ENCODE measurements at regions of chr19 and their contacts with region 1.

Region 1: DNA sequence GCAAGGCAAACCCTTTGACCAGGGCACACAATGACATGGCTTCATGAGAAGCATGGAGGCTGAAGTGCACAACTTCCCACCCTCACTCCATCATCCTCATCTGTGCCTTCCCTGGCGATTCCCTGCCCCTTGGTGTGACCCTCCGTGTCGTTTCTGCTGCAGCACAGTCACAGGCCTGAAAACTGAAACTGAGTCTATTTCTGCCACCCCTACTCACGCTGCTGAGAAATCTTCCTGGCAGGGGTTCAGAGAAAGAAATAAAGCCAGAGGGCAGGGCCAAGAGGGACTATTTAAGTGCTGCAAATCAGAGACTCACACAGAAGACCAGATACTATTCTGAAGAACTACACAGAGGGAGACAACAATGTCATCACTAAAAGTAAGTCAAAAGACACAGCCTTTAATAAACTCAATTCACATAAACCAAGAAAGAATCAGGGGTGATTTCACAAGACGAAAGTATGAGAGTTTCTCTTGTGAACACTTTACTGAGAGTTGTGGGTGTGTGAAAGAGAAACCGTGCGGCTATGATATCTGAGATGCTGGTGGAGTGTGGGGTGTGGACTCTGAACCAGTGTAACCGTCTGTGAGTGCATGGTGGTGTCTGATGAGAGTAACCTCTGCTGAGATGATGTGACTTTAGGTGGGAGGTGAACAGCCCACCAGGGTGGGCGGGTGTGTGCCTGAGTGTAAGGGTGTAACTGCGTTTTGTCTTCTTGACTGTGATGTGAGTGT is 23.5 kb downstream of the LGALS16 start:
- DNase-seq: peak; percentile 76
- ATAC-seq: peak; percentile 81
- H3K4me3 Mint-ChIP-seq: peak overlapping the region; percentile 63
- H3K27ac Mint-ChIP-seq: peak overlapping the region; percentile 79
- H3K4me1 Mint-ChIP-seq: peaks cover 44% of the 10 kb centered on the region
- H3K27me3 Mint-ChIP-seq: peaks cover 2% of the 10 kb centered on the region

Region 2: GRCh38 chr19:39539519-39540332 is 139.5 kb before region 1 on chr19 and contains the start of gene EID2:
- CTCF ChIA-PET with region 1: interaction called, 25 read pairs
- POLR2A ChIA-PET with region 1: no interaction called
- intact Hi-C with region 1: loop called in 1 of 2 experiments (anchors 5 kb)
- DNase-seq: peak; percentile 98
- ATAC-seq: peak; percentile 80
- H3K4me3 Mint-ChIP-seq: peak within 1 kb of the TSS; percentile 84
- H3K27ac Mint-ChIP-seq: peak within 1 kb of the TSS; percentile 94
- H3K4me1 Mint-ChIP-seq: peaks cover 53% of the 10 kb centered on the region
- H3K27me3 Mint-ChIP-seq: no peaks in the 10 kb centered on the region
- total RNA-seq, gene EID2: 9.0 to 10.7 TPM

Region 3: DNA sequence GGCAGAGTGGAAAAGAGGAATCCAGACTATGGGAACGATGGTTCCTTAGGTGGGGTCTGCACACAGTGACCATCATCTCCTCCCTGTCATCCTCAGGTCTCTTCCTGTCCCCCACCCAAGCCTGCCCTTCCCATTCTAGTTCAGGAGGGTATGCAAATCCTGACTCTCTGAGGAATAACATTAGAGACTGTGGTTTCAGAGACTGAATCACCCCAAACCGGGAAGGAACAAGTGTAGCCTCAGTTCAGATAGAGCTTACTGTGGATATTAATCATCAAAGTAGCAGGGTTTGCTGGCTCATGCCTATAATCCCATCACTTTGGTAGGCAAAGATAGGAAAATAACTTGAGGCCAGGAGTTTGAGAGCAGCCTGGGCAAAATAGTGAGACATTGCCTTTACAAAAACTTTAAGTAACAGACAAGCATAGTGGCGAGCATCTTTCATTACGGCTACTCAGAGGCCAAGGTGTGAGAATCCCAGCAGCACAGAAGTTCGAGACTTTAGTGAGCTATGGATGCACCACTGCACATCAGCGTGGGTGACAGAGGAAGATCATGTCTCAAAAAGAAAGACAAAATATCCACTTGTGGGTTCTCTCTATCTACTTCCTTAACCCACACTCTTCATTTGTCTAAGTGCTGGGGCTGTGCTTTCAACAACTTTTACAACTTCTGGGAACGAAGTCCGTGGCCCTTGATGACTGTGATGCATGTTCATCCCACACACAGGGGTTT is 96.2 kb before region 1 on chr19:
- CTCF ChIA-PET with region 1: no interaction called
- POLR2A ChIA-PET with region 1: no interaction called
- intact Hi-C with region 1: loop called in 1 of 2 experiments (anchors 1 kb)
- DNase-seq: peak; percentile 54
- ATAC-seq: peak; percentile 75
- H3K4me3 Mint-ChIP-seq: no peak overlapping the region
- H3K27ac Mint-ChIP-seq: no peak overlapping the region
- H3K4me1 Mint-ChIP-seq: no peaks in the 10 kb centered on the region
- H3K27me3 Mint-ChIP-seq: peaks cover 37% of the 10 kb centered on the region

Region 4: GRCh38 chr19:39692166-39692565 is 12.9 kb after region 1 on chr19:
- CTCF ChIA-PET with region 1: no interaction called
- POLR2A ChIA-PET with region 1: no interaction called
- intact Hi-C with region 1: no loop called
- DNase-seq: peak; percentile 39
- ATAC-seq: peak; percentile 70
- H3K4me3 Mint-ChIP-seq: no peak overlapping the region
- H3K27ac Mint-ChIP-seq: no peak overlapping the region
- H3K4me1 Mint-ChIP-seq: peaks cover 7% of the 10 kb centered on the region
- H3K27me3 Mint-ChIP-seq: peaks cover 18% of the 10 kb centered on the region

Region 5: DNA sequence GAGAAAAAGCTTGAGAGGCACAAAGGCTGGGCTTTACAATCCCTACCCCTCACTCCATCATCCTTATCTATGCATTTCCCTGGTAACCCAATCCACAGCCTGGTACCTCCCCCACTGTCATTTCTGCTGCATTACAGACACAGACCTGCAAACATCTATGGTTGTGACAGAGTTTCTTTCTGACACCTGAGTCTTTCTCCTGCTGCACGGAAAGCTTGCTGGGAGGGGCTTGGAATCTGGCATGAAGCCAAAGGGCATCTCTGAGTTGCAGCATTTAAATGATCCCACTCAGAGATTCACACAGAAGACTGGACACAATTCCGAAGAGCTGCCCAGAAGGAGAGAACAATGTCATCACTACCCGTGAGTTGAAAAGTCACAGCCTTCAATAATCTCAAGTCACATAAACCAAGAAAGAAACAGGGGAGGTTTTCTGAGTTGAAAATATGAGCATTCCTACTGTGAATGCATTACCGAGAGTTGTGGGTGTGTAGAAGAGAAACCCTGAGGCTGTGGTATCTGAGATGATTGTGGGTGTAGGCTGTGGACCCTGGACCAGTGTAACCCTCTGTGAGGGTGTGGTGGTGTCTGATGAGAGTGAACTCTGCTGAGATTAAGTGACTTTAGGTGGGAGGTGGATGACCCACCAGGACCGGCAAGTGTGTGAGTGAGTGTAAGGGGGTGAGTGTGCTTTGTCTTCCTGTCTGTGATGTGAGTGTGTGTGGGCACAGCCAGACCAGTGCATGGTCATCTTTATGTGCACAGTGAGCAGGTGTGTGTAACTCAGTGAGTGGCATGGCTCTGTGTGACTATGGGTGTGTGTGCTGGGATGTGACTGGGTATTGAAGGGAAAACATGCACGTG is 25.2 kb after region 1 on chr19 and contains the start of gene LGALS14:
- CTCF ChIA-PET with region 1: no interaction called
- POLR2A ChIA-PET with region 1: interaction called, 3 read pairs
- intact Hi-C with region 1: loop called (anchors 1 kb)
- DNase-seq: peak; percentile 58
- ATAC-seq: peak; percentile 83
- H3K4me3 Mint-ChIP-seq: peak within 1 kb of the TSS; percentile 4
- H3K27ac Mint-ChIP-seq: peak within 1 kb of the TSS; percentile 85
- H3K4me1 Mint-ChIP-seq: peaks cover 34% of the 10 kb centered on the region
- H3K27me3 Mint-ChIP-seq: peaks cover 14% of the 10 kb centered on the region
- total RNA-seq, gene LGALS14: 0.80 to 1.4 TPM

Region 6: GRCh38 chr19:39737351-39737750 is 58.1 kb after region 1 on chr19:
- CTCF ChIA-PET with region 1: no interaction called
- POLR2A ChIA-PET with region 1: no interaction called
- intact Hi-C with region 1: loop called in 1 of 2 experiments (anchors 2 kb)
- DNase-seq: peak; percentile 13
- ATAC-seq: peak; percentile 80
- H3K4me3 Mint-ChIP-seq: no peak overlapping the region
- H3K27ac Mint-ChIP-seq: no peak overlapping the region
- H3K4me1 Mint-ChIP-seq: peaks cover 24% of the 10 kb centered on the region
- H3K27me3 Mint-ChIP-seq: peaks cover 2% of the 10 kb centered on the region

Measured in activated CD4-positive, alpha-beta T cell treated with anti-CD3 and anti-CD28 coated beads for 36 hours (primary cell).